ENCODE measurements at regions of chr19 and their contacts with region 1.

Region 1: DNA sequence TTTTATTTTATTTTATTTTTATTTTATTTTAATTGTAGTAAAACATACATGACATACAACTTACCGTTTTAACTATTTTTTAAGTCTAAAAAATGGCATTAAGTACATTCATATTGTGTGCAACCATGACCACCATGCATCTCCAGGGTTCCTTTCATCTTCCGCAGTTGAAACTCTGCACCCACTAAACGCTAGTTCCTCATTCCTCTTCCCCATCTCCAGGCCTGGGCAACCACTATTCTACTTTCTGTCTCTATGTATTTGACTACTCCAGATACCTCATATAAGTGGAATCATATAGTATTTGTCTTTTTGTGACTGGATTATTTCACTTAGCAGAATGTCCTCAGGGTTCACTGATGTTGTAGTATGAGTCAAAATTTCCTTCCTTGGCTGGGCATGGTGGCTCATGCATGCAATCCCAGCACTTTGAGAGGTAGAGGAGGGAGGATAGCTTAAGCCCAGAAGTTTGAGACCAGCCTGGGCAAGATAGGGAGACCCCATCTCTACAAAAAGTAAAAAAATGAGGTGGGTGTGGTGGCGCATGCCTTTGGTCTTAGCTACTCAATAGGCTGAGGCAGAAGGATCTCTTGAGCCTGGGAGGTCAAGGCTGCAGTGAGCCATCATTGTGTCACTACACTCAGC is 55.7 kb upstream of the ZNF507 start:
- DNase-seq: no peak
- H3K4me3 ChIP-seq: no peak overlapping the region
- H3K27ac ChIP-seq: no peak overlapping the region
- H3K4me1 ChIP-seq: peaks cover 0 to 9% (median 0%) of the 10 kb centered on the region in 4 donors
- H3K27me3 ChIP-seq: peaks cover 0 to 23% (median 0%) of the 10 kb centered on the region in 3 donors
- CTCF ChIP-seq: no peak
- EP300 ChIP-seq: no peak
- POLR2A ChIP-seq: no peak

Region 2: GRCh38 chr19:32238076-32238475 is 51.6 kb before region 1 on chr19:
- intact Hi-C with region 1: no loop called
- DNase-seq: no peak
- H3K4me3 ChIP-seq: no peak overlapping the region
- H3K27ac ChIP-seq: no peak overlapping the region
- H3K4me1 ChIP-seq: no peaks in the 10 kb centered on the region
- H3K27me3 ChIP-seq: peaks cover 0 to 7% (median 0%) of the 10 kb centered on the region in 3 donors
- CTCF ChIP-seq: no peak
- EP300 ChIP-seq: no peak
- POLR2A ChIP-seq: no peak

Region 3: GRCh38 chr19:32566246-32566830 is 276.6 kb after region 1 on chr19:
- intact Hi-C with region 1: loop called (anchors 10 kb)
- DNase-seq: no peak
- H3K4me3 ChIP-seq: no peak overlapping the region
- H3K27ac ChIP-seq: no peak overlapping the region
- H3K4me1 ChIP-seq: no peaks in the 10 kb centered on the region
- H3K27me3 ChIP-seq: peaks cover 0 to 37% (median 4%) of the 10 kb centered on the region in 3 donors
- CTCF ChIP-seq: no peak
- EP300 ChIP-seq: no peak
- POLR2A ChIP-seq: no peak

Measured in stomach (tissue), 19 donors.